ENCODE measurements at regions of chr1 and their contacts with region 1.

Region 1: GRCh38 chr1:155001675-155002463 is 733 bp upstream of the ZBTB7B start:
- DNase-seq: peak; percentile 98
- ATAC-seq: peak; percentile 81
- H3K4me3 ChIP-seq: peak overlapping the region; percentile 74 to 95 (median 86)
- H3K4me3 Mint-ChIP-seq: peak overlapping the region; percentile 90
- H3K27ac ChIP-seq: peak overlapping the region; percentile 73 to 80
- H3K27ac Mint-ChIP-seq: peak overlapping the region; percentile 96
- H3K4me1 ChIP-seq: peaks cover 41 to 50% of the 10 kb centered on the region in 2 donors
- H3K4me1 Mint-ChIP-seq: peaks cover 51% of the 10 kb centered on the region
- H3K27me3 ChIP-seq: no peaks in the 10 kb centered on the region
- H3K27me3 Mint-ChIP-seq: no peaks in the 10 kb centered on the region
- CTCF ChIP-seq: no peak

Region 2: DNA sequence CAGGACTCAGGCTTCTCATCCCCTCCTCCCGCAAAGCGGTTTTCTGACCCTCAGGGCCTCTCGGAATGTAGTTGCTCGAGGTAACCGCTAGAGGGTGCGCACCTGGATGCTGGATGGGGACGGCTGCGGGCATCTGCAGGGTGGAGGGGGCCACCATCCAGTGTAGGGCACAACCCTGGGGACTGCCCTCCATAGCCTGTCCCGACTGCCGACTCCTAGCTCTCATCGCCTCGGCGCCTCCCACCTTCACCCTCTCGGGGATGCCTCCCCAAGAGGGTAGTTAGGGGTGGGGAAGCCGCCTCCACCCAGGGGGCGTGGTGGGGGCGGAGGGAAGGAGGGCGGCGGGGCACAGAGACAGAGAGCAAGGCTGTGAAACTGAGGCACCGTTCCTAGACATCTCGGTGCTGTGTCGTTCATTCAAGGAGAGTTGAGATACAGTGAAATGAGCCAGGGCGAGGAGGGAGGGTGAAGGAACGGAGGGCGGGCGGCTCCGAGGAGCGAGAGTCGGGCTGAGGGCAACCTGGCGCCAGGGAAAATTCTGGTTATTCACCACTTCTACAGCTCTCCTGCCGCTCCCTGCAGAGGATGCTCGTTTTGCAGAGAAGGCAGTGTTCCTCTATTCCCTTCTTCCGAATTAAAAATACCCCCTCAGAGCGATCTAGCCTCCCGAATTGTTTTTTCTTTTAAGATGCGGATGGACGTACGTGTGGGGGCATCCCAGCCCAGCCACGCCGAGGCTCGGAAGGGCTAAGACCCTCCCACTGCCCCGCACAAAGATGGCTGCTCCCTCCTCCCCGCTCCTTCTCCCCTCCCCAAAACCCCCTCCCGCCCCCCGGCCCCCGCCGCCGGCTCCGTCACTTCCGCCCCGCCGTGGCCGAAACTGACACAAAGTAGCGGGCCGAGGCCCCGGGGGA is 676.9 kb before region 1 on chr1 and contains the start of gene ATP8B2:
- CTCF ChIA-PET with region 1: no interaction called
- POLR2A ChIA-PET with region 1: no interaction called
- intact Hi-C with region 1: loop called (anchors 5 kb)
- DNase-seq: peak; percentile 89
- ATAC-seq: peak; percentile 68
- H3K4me3 ChIP-seq: peak within 1 kb of the TSS; percentile 57 to 90 (median 87)
- H3K4me3 Mint-ChIP-seq: peak within 1 kb of the TSS; percentile 93
- H3K27ac ChIP-seq: peak within 1 kb of the TSS; percentile 48 to 67
- H3K27ac Mint-ChIP-seq: peak within 1 kb of the TSS; percentile 89
- H3K4me1 ChIP-seq: peaks cover 30 to 46% of the 10 kb centered on the region in 2 donors
- H3K4me1 Mint-ChIP-seq: peaks cover 42% of the 10 kb centered on the region
- H3K27me3 ChIP-seq: peaks cover 0 to 18% (median 3%) of the 10 kb centered on the region in 4 experiments
- H3K27me3 Mint-ChIP-seq: peaks cover 15% of the 10 kb centered on the region
- CTCF ChIP-seq: peak; percentile 92
- total RNA-seq, gene ATP8B2: 31.1 and 32.4 TPM in 2 replicates

Region 3: GRCh38 chr1:154821083-154821482 is 180.8 kb before region 1 on chr1:
- CTCF ChIA-PET with region 1: no interaction called
- POLR2A ChIA-PET with region 1: no interaction called
- intact Hi-C with region 1: no loop called
- DNase-seq: no peak
- ATAC-seq: no peak
- H3K4me3 ChIP-seq: no peak overlapping the region
- H3K4me3 Mint-ChIP-seq: no peak overlapping the region
- H3K27ac ChIP-seq: no peak overlapping the region
- H3K27ac Mint-ChIP-seq: no peak overlapping the region
- H3K4me1 ChIP-seq: peaks cover 4 to 26% of the 10 kb centered on the region in 2 donors
- H3K4me1 Mint-ChIP-seq: peaks cover 12% of the 10 kb centered on the region
- H3K27me3 ChIP-seq: no peaks in the 10 kb centered on the region
- H3K27me3 Mint-ChIP-seq: peaks cover 7% of the 10 kb centered on the region
- CTCF ChIP-seq: no peak

Region 4: GRCh38 chr1:154955718-154956543 is 45.9 kb before region 1 on chr1 and contains the start of gene PBXIP1:
- CTCF ChIA-PET with region 1: interaction called, 34 read pairs
- POLR2A ChIA-PET with region 1: interaction called, 8 read pairs
- intact Hi-C with region 1: loop called (anchors 1 kb)
- DNase-seq: peak; percentile 94
- ATAC-seq: peak; percentile 68
- H3K4me3 ChIP-seq: peak within 1 kb of the TSS; percentile 71 to 97 (median 83)
- H3K4me3 Mint-ChIP-seq: peak within 1 kb of the TSS; percentile 92
- H3K27ac ChIP-seq: peak within 1 kb of the TSS; percentile 99
- H3K27ac Mint-ChIP-seq: peak within 1 kb of the TSS; percentile 96
- H3K4me1 ChIP-seq: peaks cover 59 to 68% of the 10 kb centered on the region in 2 donors
- H3K4me1 Mint-ChIP-seq: peaks cover 72% of the 10 kb centered on the region
- H3K27me3 ChIP-seq: no peaks in the 10 kb centered on the region
- H3K27me3 Mint-ChIP-seq: no peaks in the 10 kb centered on the region
- CTCF ChIP-seq: peak; percentile 39
- total RNA-seq, gene PBXIP1: 212 and 219 TPM in 2 replicates

Region 5: DNA sequence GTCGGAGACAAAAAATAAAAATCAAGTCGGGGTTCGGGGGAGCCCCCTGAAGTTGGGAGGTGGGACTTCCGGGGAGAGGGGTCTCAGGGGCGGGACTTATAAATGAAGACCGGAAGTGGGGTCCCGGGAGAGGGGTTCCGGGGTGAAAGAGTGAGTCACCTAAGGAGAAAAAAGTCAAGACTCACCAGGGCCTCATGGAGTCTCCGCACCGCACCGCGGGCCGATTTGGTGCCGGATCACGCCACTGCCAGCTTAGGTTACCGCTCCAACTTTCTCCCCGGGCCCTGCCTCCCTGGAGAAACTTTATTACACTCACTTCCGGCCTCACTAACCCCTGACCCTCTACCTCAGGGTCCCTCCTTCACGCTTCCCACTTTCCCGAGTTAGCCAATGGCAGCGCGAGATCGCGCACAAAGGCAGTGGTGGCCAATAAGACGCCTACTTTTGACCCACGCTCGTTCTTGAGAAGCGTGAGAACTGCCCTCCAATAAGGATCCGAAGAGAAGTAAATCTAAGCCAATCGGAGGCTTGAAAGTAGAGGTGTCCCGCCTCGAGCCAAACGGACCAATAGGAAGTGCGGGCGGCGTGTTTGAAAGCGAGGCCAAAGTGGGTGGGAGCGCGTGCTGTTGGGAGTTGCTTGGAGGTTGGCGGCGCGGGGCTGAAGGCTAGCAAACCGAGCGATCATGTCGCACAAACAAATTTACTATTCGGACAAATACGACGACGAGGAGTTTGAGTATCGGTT is 27.6 kb before region 1 on chr1 and contains the start of gene CKS1B:
- CTCF ChIA-PET with region 1: interaction called, 13 read pairs
- POLR2A ChIA-PET with region 1: interaction called, 9 read pairs
- intact Hi-C with region 1: loop called (anchors 1 kb)
- DNase-seq: peak; percentile 100
- ATAC-seq: peak; percentile 80
- H3K4me3 ChIP-seq: peak within 1 kb of the TSS; percentile 71 to 99 (median 90)
- H3K4me3 Mint-ChIP-seq: no peak within 1 kb of the TSS
- H3K27ac ChIP-seq: peak within 1 kb of the TSS; percentile 90 to 94
- H3K27ac Mint-ChIP-seq: no peak within 1 kb of the TSS
- H3K4me1 ChIP-seq: peaks cover 22 to 44% of the 10 kb centered on the region in 2 donors
- H3K4me1 Mint-ChIP-seq: peaks cover 29% of the 10 kb centered on the region
- H3K27me3 ChIP-seq: no peaks in the 10 kb centered on the region
- H3K27me3 Mint-ChIP-seq: no peaks in the 10 kb centered on the region
- CTCF ChIP-seq: no peak
- total RNA-seq, gene CKS1B: 16.8 and 17.5 TPM in 2 replicates

Region 6: GRCh38 chr1:154988120-154988957 is 13.5 kb before region 1 on chr1:
- CTCF ChIA-PET with region 1: interaction called, 295 read pairs
- POLR2A ChIA-PET with region 1: interaction called, 9 read pairs
- intact Hi-C with region 1: loop called (anchors 1 kb)
- DNase-seq: no peak
- ATAC-seq: no peak
- H3K4me3 ChIP-seq: no peak overlapping the region
- H3K4me3 Mint-ChIP-seq: no peak overlapping the region
- H3K27ac ChIP-seq: no peak overlapping the region
- H3K27ac Mint-ChIP-seq: no peak overlapping the region
- H3K4me1 ChIP-seq: peaks cover 8 to 14% of the 10 kb centered on the region in 2 donors
- H3K4me1 Mint-ChIP-seq: peaks cover 23% of the 10 kb centered on the region
- H3K27me3 ChIP-seq: no peaks in the 10 kb centered on the region
- H3K27me3 Mint-ChIP-seq: no peaks in the 10 kb centered on the region
- CTCF ChIP-seq: no peak

Region 7: DNA sequence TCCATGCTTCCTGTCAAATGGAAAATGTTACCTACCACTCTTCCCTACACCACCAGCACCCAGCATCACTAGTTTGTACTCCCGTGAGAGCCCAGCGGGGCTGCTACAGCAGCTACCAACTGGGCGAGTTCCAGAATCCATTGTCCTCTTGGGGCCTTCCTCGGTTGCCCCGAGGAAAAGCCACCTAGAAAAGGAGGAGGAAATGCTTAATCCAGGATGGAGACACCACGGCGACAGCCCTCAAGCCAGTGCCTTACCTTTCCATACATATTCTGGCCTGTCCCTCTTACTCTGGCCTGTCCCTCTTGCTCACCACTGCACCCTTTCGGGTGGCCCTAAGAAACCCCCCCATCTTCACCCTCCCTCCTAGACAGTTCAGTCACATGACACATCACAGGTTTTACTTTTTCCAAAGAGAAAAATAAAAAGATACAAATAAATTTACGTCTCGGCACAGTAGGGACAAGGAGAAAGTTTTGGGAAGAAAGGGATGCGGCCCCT is 908.8 kb after region 1 on chr1:
- CTCF ChIA-PET with region 1: no interaction called
- POLR2A ChIA-PET with region 1: no interaction called
- intact Hi-C with region 1: no loop called
- DNase-seq: peak; percentile 58
- ATAC-seq: peak; percentile 22
- H3K4me3 ChIP-seq: peak overlapping the region; percentile 64 to 90 (median 71)
- H3K4me3 Mint-ChIP-seq: peak overlapping the region; percentile 96
- H3K27ac ChIP-seq: peak overlapping the region; percentile 59 to 79
- H3K27ac Mint-ChIP-seq: peak overlapping the region; percentile 97
- H3K4me1 ChIP-seq: peaks cover 14 to 16% of the 10 kb centered on the region in 2 donors
- H3K4me1 Mint-ChIP-seq: peaks cover 23% of the 10 kb centered on the region
- H3K27me3 ChIP-seq: no peaks in the 10 kb centered on the region
- H3K27me3 Mint-ChIP-seq: no peaks in the 10 kb centered on the region
- CTCF ChIP-seq: no peak